SK-N-SH (cell line): ENCODE measurements at regions of chr22 and their contacts with region 1.

Region 1: GRCh38 chr22:22043296-22044078 is 60.9 kb upstream of the TOP3B start:
- DNase-seq: no peak
- H3K4me3 ChIP-seq: no peak overlapping the region
- H3K27ac ChIP-seq: no peak overlapping the region
- H3K4me1 ChIP-seq: no peaks in the 10 kb centered on the region
- H3K27me3 ChIP-seq: peaks cover 15% of the 10 kb centered on the region; the same call in 1 of the 2 replicates
- CTCF ChIP-seq: no peak
- EP300 ChIP-seq: no peak
- RAD21 ChIP-seq: no peak

Region 2: GRCh38 chr22:22060200-22061084 is 17.0 kb after region 1 on chr22:
- CTCF ChIA-PET with region 1: interaction called, 32 read pairs
- POLR2A ChIA-PET with region 1: no interaction called
- DNase-seq: peak; percentile 71
- H3K4me3 ChIP-seq: peak overlapping the region in 1 of 2 experiments; percentile 29; a peak in 1 of 4 replicates
- H3K27ac ChIP-seq: no peak overlapping the region
- H3K4me1 ChIP-seq: no peaks in the 10 kb centered on the region
- H3K27me3 ChIP-seq: peaks cover 23% of the 10 kb centered on the region; the same call in 1 of the 2 replicates
- CTCF ChIP-seq: peak; percentile 72
- EP300 ChIP-seq: no peak
- RAD21 ChIP-seq: peak; percentile 57